BJ (cell line): ENCODE measurements at regions of chr3 and their contacts with region 1.

Region 1: DNA sequence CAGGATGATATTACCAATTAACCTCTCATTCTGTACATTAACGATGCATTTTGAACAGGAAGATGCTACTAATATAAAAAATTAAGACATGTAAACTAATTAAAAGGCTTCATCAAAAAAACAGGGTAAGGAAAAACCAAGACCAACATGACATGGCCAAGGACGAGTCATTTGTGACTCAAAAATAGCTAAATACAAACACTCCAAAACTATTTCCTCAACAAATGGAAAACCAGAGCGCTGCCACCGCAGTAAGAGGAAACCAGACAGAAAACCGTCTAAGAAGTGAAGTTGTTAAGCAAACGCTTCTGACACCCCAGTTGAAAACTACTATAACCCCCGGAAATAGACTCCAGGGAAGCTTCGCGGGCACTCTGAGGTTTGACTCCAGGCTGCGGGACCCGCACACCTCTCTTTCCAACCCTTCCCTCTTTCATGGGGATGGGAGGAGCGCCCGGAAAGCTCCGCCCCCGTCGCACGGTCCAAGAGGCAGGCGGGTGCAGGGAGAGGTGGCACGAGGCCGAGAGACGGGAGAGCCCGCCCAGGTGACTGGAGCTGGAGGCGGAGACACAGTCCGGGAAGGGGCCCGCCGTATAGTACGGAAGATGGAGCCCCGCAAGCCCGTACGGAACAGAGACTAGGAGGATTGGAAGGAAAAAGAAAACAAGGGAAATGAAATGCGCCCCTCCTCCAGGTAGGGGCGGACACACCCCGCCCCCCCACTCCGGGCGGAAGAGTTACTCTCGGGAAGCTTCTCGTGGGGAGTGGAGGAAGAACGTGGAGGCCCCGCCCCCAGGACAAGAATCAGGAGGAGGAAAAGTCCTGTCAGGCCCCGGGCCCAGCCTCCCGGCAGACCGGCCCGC is 708 bp downstream of the DCAF1 start:
- DNase-seq: peak; percentile 54
- H3K4me3 ChIP-seq: peak overlapping the region; percentile 59
- H3K27me3 ChIP-seq: no peaks in the 10 kb centered on the region
- CTCF ChIP-seq: no peak

Region 2: DNA sequence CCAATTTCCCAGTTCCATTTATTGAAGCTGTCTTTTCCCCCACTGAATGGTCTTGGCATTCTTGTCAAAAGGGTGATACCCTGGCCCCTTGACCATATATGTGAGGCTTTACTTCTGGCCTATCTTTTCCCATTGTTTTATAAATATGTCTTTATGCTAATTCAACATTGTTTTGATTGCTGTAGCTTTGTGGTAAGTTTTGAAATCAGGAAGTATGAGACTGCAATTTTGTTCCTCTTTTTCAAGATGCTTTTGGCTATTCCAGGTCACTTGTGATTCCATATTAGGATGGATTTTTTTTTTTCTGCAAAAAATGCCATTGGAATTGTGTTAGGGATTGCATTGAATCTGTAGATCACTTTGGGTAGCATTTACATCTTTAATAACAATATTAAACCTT is 255.2 kb before region 1 on chr3:
- CTCF ChIA-PET with region 1: no interaction called
- POLR2A ChIA-PET with region 1: no interaction called
- DNase-seq: no peak
- H3K4me3 ChIP-seq: no peak overlapping the region
- H3K27me3 ChIP-seq: no peaks in the 10 kb centered on the region
- CTCF ChIP-seq: no peak

Region 3: DNA sequence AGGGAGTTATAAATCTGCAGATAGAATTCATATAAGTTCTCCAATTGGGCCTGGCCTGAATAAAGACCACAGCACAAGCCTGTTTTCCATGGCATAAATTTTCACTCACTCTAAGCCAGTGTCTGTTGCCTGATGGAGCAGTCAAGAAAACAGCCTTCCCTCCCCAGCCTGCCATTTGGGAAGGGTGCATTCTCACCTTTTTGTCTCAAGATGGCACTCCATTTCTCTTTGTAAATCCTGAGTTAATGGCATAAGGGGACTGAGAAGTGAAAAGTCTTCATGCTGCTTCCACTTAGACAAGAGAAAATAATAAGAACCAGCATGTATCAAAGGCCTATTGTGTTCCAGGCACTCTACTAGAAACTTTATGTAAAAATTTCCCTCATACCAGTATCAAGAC is 229.6 kb before region 1 on chr3:
- CTCF ChIA-PET with region 1: no interaction called
- POLR2A ChIA-PET with region 1: no interaction called
- DNase-seq: no peak
- H3K4me3 ChIP-seq: no peak overlapping the region
- H3K27me3 ChIP-seq: no peaks in the 10 kb centered on the region
- CTCF ChIP-seq: peak; percentile 25; the same call in 1 of the 2 replicates

Region 4: DNA sequence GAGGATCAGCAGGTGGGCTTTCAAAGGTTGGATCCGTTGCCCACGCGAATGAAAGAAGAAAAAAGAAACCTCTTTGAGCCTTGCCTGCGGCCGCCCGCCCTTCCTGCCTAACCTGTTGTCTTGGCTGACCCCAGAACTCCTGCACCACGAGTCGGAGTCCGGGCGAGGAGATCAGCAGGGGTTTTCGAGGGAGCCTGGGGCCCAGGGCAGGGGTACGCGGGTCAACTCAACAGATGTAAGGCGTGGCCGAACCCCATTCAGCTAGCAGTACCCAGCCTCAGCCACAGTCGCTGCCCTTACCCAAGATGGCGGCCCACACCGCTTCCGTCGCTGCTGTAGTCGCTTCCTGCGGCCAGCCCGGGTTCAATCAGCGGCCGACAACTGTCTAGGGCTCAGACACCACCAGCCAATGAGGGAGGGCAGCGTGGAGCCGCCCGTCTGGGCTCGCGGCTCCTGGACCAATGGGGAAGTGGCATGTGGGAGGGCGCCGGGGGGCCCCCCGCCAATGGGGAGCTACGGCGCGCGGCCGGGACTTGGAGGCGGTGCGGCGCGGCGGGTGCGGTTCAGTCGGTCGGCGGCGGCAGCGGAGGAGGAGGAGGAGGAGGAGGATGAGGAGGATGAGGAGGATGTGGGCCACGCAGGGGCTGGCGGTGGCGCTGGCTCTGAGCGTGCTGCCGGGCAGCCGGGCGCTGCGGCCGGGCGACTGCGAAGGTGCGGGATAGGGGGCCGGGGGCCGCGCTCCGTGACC is 114.2 kb before region 1 on chr3 and contains the start of gene MANF:
- CTCF ChIA-PET with region 1: interaction called, 13 read pairs
- POLR2A ChIA-PET with region 1: interaction called, 3 read pairs
- DNase-seq: peak; percentile 88
- H3K4me3 ChIP-seq: peak within 1 kb of the TSS; percentile 91
- H3K27me3 ChIP-seq: no peaks in the 10 kb centered on the region
- CTCF ChIP-seq: no peak
- polyA plus RNA-seq, gene MANF: 21.5 and 58.1 TPM in 2 replicates

Region 5: DNA sequence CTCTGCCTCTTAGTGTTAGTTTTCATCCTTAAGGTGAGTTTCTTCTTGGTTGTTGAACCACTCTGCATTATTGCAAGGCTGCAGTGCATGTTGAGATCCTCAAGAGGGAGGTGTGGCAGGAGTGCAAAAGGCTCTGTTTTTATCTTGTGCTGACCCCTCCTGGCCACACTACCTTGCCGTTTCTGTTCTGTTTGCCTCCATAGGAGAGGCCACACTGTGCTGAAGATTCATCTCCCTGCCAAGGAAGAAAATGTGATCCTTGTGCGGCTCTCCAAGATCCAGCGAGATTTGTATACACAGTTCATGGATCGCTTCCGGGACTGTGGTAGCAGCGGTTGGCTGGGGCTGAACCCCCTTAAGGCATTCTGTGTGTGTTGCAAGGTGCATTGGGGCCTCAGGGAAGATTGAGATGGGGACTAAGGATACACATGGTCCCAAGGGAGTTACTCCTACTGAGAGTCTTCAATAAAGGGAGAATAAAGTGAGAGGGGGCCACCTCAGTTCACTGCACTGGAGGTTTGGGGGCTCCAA is 138.9 kb after region 1 on chr3:
- CTCF ChIA-PET with region 1: interaction called, 26 read pairs
- POLR2A ChIA-PET with region 1: no interaction called
- DNase-seq: no peak
- H3K4me3 ChIP-seq: no peak overlapping the region
- H3K27me3 ChIP-seq: no peaks in the 10 kb centered on the region
- CTCF ChIP-seq: peak; percentile 90

Region 6: DNA sequence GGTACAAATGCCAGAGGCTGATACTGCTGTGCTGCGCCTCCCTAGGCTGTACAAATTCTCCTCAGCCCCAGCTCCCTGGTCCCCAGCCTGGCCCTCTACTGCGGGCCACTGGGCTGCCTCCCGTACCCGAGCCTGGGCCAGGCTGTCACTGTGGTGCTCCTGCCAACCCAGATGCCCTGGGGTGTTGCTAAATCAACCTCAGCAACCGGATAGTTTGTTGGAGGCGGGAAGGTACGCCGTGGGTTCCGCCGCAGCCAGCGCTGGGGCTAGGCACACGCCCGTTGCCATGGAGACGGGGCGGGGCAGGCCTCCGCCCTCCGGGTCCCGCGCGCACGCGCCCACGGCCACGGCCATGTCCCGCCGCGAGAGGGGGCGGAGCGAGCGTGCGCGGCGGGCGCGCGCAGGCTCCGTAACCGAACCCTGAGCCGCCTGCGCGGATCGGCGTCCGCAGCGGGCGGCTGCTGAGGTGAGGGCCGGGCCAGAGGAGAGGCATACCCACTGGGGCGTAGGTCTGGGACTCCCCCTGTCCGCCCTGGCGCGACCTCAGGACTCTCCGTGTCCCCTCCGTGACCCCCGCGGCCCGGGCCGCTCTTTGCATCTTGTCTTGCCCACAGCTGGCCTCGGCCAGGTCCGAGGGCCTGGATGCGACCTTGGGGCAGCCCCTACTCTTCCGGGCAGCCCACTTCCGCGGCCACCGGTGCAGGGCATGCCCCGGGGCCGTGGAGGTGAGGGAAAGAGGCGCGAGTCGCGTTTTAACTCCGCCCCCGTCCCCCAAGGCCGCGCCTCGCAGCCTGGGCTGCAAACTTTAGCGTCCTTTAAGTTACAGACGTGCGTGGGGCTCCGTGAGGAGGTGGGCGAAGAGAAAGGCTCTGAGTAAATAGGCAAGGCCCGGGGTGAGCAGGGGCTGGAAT is 172.0 kb after region 1 on chr3 and contains the start of gene TEX264:
- CTCF ChIA-PET with region 1: interaction called, 207 read pairs
- POLR2A ChIA-PET with region 1: interaction called, 16 read pairs
- DNase-seq: peak; percentile 20
- H3K4me3 ChIP-seq: peak within 1 kb of the TSS; percentile 90
- H3K27me3 ChIP-seq: no peaks in the 10 kb centered on the region
- CTCF ChIP-seq: no peak
- polyA plus RNA-seq, gene TEX264: 72.5 and 100.0 TPM in 2 replicates

Region 7: DNA sequence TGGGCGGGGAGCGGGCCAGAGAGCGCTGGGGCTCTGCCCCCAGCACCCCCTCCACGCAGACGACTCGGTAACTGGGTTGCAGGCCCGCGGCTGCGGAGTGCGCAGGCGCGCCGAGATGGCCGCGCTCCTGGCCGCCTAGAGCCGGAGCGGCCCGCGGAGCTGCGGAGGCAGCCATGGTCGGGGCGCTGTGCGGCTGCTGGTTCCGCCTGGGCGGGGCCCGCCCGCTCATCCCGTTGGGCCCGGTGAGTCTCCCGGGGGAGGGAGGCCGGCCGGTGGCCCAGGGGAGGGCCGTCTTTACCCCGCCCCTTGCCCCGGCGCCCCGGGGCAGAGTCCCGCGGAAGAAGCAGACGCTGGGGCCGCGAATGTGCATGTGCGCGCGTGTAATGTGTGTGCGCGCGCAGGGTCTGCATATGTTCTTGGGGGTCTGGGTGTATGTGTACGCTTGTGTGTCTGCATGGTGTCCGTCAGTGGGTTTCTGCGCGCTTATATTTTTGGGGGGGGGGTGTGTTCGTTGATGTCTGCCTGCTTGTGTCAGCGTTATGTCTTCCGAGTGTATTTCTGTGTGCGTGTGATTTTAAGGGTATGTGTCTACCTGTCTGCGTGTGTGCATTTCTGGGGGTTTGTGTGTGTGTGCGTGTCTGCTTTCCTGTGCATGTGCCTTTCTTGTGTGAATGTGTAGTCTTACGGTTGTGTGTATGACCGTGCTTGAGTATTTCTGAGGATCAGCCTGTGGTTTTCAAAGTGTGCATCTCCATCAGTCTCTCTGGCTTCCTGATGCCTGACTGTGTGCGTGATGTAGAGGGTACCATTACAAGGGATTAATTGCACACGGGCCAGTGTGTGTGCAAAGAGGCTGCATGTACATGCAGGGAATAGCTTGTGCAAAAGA is 476.1 kb after region 1 on chr3 and contains the start of gene ABHD14A:
- CTCF ChIA-PET with region 1: no interaction called
- POLR2A ChIA-PET with region 1: interaction called, 10 read pairs
- DNase-seq: no peak
- H3K4me3 ChIP-seq: peak within 1 kb of the TSS; percentile 52
- H3K27me3 ChIP-seq: no peaks in the 10 kb centered on the region
- CTCF ChIP-seq: no peak
- polyA plus RNA-seq, gene ABHD14A: 10.7 and 16.5 TPM in 2 replicates

Region 8: DNA sequence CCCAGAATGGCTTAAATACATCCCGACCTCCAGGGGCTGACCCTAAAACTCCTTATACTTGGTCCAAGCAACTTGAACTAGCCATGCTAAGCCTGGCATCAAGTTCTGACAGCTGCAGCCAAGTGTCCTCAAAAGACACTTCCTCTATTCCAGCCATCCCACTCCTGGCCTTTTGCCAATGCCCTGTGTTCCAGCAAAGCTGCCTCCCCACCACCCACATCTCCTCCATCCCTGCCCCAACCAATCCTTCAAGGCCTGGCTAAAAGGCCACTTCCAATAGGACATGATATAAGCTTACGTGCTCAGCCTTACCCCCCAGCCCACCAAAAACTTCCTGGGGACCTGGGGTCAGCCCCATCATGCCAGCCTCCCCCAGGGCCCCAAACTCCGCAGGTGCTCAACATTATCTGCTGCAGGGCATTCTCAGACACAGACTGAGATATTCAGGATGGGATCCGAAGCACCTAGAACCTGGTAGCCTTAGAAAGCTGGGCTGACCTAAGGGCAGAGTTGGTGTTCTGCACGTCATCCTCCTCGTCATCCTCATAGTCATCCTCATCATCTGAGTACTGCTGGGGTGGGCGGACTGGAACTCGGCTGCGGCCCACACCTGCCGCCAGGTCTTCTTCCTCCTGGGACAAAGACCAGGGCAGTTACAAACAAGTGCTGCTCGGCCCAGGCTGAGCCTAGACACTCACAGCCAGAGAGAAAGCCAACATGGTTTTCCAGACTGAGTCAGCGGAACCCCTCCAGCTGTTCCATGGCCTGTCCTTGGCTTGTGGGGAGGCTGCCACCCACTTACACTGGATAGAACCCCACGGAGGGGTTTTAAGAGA is 905.1 kb after region 1 on chr3:
- CTCF ChIA-PET with region 1: no interaction called
- POLR2A ChIA-PET with region 1: no interaction called
- DNase-seq: no peak
- H3K4me3 ChIP-seq: no peak overlapping the region
- H3K27me3 ChIP-seq: no peaks in the 10 kb centered on the region
- CTCF ChIP-seq: no peak